Sciatic nerve (tissue), 2 donors: ENCODE measurements at regions of chrX and their contacts with region 1.

Region 1: GRCh38 chrX:109299091-109299490 is 182.8 kb downstream of the GUCY2F start:
- DNase-seq: no peak
- ATAC-seq: no peak

Region 2: DNA sequence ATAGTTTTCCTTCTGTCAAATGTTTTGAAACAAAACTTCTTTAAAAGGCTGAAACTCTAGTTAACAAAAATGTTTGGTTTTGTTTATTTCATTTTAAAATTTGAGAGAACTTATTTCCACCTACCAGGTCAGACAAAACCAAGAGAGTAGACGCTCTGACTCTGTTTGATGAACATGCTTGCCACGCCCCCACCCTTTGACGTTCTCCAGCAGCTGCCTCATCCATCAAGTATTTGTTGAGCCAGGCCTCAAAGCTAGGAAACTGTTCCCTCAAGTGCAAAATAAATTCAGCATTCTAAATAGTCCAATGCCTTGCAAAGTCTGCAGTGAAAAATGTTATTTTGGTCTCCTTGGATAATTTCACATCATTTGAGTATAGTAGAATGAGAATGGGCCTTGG is 61.2 kb after region 1 on chrX:
- intact Hi-C with region 1: loop called (anchors 2 kb)
- DNase-seq: no peak
- ATAC-seq: no peak